ENCODE measurements at regions of chr4 and their contacts with region 1.

Region 1: DNA sequence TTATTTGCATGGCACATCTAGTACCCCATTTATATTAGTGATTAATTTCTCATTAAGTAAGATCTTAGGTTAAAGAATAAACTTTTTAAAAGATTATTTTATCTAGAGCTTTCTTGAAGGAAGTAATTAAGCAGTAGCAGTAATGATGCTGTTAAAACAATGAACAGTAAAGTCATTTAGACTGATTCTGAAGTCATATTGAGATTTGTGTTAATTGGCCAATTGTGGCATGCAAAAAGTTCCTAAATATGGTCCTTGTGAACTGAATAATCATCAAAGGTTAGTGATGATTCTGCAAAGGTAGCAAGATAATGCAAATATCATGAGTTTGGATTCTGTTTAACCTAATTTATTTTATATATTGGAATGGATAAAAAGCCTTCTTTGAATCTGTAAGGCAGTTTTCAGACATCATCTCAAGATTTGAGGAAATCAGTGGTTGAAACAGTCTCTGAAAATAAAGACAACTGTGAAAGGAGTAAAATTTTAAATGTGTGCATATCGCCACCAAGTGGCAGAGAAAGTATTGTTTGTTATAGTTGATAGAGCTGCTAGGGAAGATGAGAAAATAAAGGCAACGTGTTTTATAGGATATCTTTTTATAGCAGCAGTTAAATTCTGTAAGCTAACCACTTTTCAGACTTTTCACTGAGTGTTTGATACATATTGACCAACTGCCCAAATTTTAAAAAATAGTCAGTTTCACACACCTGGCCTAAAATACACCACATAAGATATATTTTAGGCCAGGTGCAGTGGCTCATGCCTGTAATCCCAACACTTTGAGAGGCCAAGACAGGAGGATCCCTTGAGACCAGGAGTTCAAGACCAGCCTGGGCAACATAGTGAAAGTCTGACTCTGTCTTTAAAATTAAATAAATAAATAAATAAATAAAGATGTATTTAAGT is 79.6 kb downstream of the CCKAR start:
- DNase-seq: peak in 6 of 14 experiments; percentile 8 to 72 (median 62)
- ATAC-seq: peak; percentile 62
- H3K4me3 ChIP-seq: no peak overlapping the region
- H3K4me3 Mint-ChIP-seq: no peak overlapping the region
- H3K27ac ChIP-seq: no peak overlapping the region
- H3K27ac Mint-ChIP-seq: no peak overlapping the region
- H3K4me1 ChIP-seq: no peaks in the 10 kb centered on the region
- H3K4me1 Mint-ChIP-seq: no peaks in the 10 kb centered on the region
- H3K27me3 ChIP-seq: no peaks in the 10 kb centered on the region
- H3K27me3 Mint-ChIP-seq: no peaks in the 10 kb centered on the region
- CTCF ChIP-seq: peak; percentile 79

Region 2: DNA sequence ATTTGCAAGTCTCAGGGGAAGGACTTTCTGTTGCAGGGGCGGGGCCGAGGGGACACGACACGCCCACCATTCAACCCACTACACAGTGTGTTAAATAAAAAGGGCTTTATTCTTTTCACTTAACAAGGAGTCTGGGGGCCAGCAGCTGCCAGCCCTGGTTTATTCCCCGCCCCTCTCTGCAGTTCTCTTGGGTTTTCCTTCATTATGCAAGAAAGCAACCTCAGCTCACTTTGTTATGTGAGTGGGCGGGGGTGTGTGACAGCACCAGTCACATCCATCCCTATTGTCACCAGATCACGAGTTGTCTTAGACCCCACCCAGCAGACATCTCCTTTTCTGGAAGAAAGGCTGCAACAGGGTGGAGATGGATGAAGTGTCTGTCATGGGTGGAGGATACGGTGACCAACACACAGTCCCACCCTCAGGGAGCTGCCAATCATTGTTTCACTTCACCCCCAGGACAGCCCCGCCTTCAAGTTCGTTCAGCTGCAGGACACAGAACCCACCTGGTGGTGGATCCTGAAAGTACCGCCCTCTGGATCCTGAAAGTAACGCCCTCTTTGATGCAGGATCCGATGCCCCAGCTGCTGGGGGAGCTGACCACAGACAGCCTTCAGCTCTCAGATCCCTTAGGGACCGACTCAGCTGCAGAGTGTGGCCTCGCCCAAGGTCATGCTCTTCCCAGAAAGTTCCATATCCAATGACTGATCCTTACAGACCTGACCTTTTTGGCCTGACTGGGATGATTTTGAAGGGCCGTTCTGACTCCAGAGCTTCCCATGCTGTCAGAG is 417.0 kb before region 1 on chr4:
- CTCF ChIA-PET with region 1: interaction called, 3 read pairs
- POLR2A ChIA-PET with region 1: no interaction called
- intact Hi-C with region 1: loop called (anchors 1 kb)
- DNase-seq: peak in 3 of 14 experiments; percentile 2 to 46 (median 27)
- ATAC-seq: no peak
- H3K4me3 ChIP-seq: no peak overlapping the region
- H3K4me3 Mint-ChIP-seq: no peak overlapping the region
- H3K27ac ChIP-seq: no peak overlapping the region
- H3K27ac Mint-ChIP-seq: no peak overlapping the region
- H3K4me1 ChIP-seq: no peaks in the 10 kb centered on the region
- H3K4me1 Mint-ChIP-seq: no peaks in the 10 kb centered on the region
- H3K27me3 ChIP-seq: no peaks in the 10 kb centered on the region
- H3K27me3 Mint-ChIP-seq: no peaks in the 10 kb centered on the region
- CTCF ChIP-seq: no peak

Region 3: DNA sequence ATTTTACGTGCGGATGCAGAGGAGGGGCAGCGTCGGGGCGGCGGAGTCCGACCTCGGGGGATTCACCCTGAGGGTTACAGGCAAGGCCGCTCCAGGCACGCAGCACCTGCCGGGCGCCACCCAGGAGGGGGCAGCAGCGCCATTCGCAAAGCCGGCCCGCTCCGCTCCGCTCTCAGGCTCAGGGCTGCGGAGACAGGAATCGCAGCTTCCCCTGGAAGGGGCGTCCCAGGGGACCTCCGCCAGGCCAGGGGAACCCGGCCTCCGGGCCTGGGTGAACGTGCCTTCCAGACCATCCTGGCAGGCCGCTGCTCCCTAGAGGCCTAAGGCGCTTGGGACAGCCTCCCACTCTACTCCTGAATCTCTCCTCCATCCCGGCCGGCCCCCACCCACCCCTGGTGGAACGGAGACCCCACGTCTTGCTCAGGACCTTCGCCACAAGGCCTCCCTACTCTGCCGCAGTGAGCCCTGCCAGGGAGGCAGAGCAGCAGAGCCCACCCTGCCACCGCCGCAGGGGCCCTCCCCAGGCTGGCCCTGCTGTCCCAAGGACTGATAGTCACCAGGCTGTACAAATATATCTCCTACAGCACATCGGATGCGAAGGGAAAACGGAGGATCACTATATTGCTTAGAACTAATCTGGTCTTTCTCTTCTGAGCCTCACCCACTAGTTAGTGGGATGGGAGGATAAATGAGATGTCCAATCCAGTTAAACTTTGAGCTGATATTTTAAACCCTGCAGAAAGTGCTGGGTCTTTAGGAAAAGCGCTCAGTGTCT is 381.7 kb before region 1 on chr4:
- CTCF ChIA-PET with region 1: no interaction called
- POLR2A ChIA-PET with region 1: no interaction called
- intact Hi-C with region 1: loop called (anchors 2 to 5 kb)
- DNase-seq: peak; percentile 22 to 73 (median 49)
- ATAC-seq: peak; percentile 63
- H3K4me3 ChIP-seq: no peak overlapping the region
- H3K4me3 Mint-ChIP-seq: no peak overlapping the region
- H3K27ac ChIP-seq: no peak overlapping the region
- H3K27ac Mint-ChIP-seq: no peak overlapping the region
- H3K4me1 ChIP-seq: peaks cover 6% of the 10 kb centered on the region
- H3K4me1 Mint-ChIP-seq: no peaks in the 10 kb centered on the region
- H3K27me3 ChIP-seq: peaks cover 6 to 7% of the 10 kb centered on the region in 2 experiments
- H3K27me3 Mint-ChIP-seq: peaks cover 25% of the 10 kb centered on the region
- CTCF ChIP-seq: peak; percentile 52

Region 4: GRCh38 chr4:26081795-26082498 is 328.7 kb before region 1 on chr4:
- CTCF ChIA-PET with region 1: no interaction called
- POLR2A ChIA-PET with region 1: interaction called, 3 read pairs
- intact Hi-C with region 1: loop called (anchors 1 to 2 kb)
- DNase-seq: peak in 3 of 14 experiments; percentile 63 to 70 (median 69)
- ATAC-seq: no peak
- H3K4me3 ChIP-seq: no peak overlapping the region
- H3K4me3 Mint-ChIP-seq: no peak overlapping the region
- H3K27ac ChIP-seq: no peak overlapping the region
- H3K27ac Mint-ChIP-seq: no peak overlapping the region
- H3K4me1 ChIP-seq: peaks cover 14% of the 10 kb centered on the region
- H3K4me1 Mint-ChIP-seq: peaks cover 19% of the 10 kb centered on the region
- H3K27me3 ChIP-seq: no peaks in the 10 kb centered on the region
- H3K27me3 Mint-ChIP-seq: peaks cover 7% of the 10 kb centered on the region
- CTCF ChIP-seq: peak; percentile 79

Region 5: GRCh38 chr4:26273616-26273980 is 137.0 kb before region 1 on chr4:
- CTCF ChIA-PET with region 1: no interaction called
- POLR2A ChIA-PET with region 1: no interaction called
- intact Hi-C with region 1: no loop called
- DNase-seq: peak in 2 of 14 experiments; percentile 18 to 23
- ATAC-seq: no peak
- H3K4me3 ChIP-seq: no peak overlapping the region
- H3K4me3 Mint-ChIP-seq: no peak overlapping the region
- H3K27ac ChIP-seq: no peak overlapping the region
- H3K27ac Mint-ChIP-seq: no peak overlapping the region
- H3K4me1 ChIP-seq: peaks cover 7% of the 10 kb centered on the region
- H3K4me1 Mint-ChIP-seq: no peaks in the 10 kb centered on the region
- H3K27me3 ChIP-seq: no peaks in the 10 kb centered on the region
- H3K27me3 Mint-ChIP-seq: peaks cover 5% of the 10 kb centered on the region
- CTCF ChIP-seq: no peak

Region 6: GRCh38 chr4:26330186-26330787 is 80.4 kb before region 1 on chr4:
- CTCF ChIA-PET with region 1: interaction called, 33 read pairs
- POLR2A ChIA-PET with region 1: interaction called, 5 read pairs
- intact Hi-C with region 1: loop called (anchors 1 kb)
- DNase-seq: peak in 4 of 14 experiments; percentile 26 to 73 (median 70)
- ATAC-seq: peak; percentile 82
- H3K4me3 ChIP-seq: no peak overlapping the region
- H3K4me3 Mint-ChIP-seq: no peak overlapping the region
- H3K27ac ChIP-seq: no peak overlapping the region
- H3K27ac Mint-ChIP-seq: no peak overlapping the region
- H3K4me1 ChIP-seq: peaks cover 4% of the 10 kb centered on the region
- H3K4me1 Mint-ChIP-seq: peaks cover 56% of the 10 kb centered on the region
- H3K27me3 ChIP-seq: no peaks in the 10 kb centered on the region
- H3K27me3 Mint-ChIP-seq: no peaks in the 10 kb centered on the region
- CTCF ChIP-seq: peak; percentile 84

Region 7: DNA sequence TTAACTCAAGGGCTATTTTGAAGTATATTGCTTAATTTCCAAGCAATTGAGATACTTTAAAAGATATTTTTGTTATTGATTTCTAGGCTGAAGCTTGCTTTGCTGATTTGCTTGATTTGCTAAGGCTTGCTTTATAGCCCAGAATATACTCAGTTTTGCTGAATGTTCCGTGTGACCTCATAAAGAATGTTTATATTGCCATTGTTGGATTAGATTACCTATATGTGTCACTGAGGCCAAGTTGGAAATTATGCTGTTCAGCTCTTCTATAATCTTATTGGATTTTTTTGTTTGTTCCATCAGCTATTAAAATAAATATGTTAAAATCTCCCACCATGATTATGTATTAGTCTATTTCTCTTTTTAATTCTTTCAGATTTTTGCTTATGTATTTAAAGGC is 186.2 kb after region 1 on chr4:
- CTCF ChIA-PET with region 1: no interaction called
- POLR2A ChIA-PET with region 1: no interaction called
- intact Hi-C with region 1: no loop called
- DNase-seq: no peak
- ATAC-seq: no peak
- H3K4me3 ChIP-seq: no peak overlapping the region
- H3K4me3 Mint-ChIP-seq: no peak overlapping the region
- H3K27ac ChIP-seq: no peak overlapping the region
- H3K27ac Mint-ChIP-seq: no peak overlapping the region
- H3K4me1 ChIP-seq: no peaks in the 10 kb centered on the region
- H3K4me1 Mint-ChIP-seq: peaks cover 6% of the 10 kb centered on the region
- H3K27me3 ChIP-seq: no peaks in the 10 kb centered on the region
- H3K27me3 Mint-ChIP-seq: no peaks in the 10 kb centered on the region
- CTCF ChIP-seq: no peak